Activated CD8-positive, alpha-beta T cell treated with anti-CD3 and anti-CD28 coated beads for 36 hours (primary cell): ENCODE measurements at regions of chr3 and their contacts with region 1.

Region 1: DNA sequence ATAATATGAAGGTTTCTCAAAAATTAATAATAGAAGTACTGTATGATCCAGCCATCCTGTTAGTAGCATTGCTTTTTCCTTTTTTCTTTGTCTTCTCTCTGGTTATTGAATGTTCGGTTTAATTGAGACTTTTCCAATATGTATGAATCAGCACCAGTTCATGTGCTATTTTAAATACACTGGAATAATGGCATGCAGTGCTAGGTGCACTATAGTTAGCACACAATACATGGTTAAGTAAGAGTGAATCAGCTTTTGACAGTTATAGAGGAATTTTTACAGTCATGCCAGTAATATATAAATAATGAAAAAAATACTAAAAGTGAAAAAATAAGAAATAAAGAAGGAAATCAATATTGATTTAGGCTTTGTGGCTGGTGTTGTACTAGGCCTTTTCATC is 113.8 kb upstream of the STRIT1 start:
- DNase-seq: no peak
- ATAC-seq: no peak
- H3K4me3 Mint-ChIP-seq: no peak overlapping the region
- H3K27ac Mint-ChIP-seq: no peak overlapping the region
- H3K4me1 Mint-ChIP-seq: no peaks in the 10 kb centered on the region
- H3K27me3 Mint-ChIP-seq: no peaks in the 10 kb centered on the region
- CTCF ChIP-seq: no peak

Region 2: DNA sequence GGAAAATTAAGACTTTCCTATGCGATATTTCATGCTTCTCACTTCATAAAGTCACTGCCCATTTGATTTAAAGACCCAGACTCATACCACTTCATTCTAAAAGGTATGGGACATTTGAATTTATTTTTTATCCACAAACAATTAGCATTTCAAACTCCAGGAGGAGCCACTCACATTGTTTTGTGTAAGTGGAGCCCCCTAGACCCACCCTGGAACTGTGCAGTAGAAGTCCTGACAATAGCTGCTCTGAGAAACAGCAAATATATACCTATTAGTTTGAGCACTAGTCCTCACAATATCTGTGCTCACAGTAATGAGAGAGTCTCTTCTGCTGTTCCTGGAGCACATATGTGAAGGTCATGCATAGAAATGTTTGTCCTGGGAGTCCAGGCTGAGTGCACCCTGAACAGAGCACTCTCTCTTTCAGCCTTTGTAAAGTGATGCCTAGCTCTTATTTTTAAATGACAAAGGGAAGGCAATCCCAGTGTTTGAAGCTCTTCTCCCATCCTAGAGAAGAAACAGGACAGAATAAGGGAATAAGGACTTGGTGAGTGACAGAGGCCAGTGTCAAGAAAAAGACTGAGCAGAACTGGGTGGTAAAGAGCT is 13.7 kb after region 1 on chr3:
- CTCF ChIA-PET with region 1: no interaction called
- POLR2A ChIA-PET with region 1: interaction called, 3 read pairs
- intact Hi-C with region 1: loop called (anchors 1 kb)
- DNase-seq: no peak
- ATAC-seq: no peak
- H3K4me3 Mint-ChIP-seq: no peak overlapping the region
- H3K27ac Mint-ChIP-seq: no peak overlapping the region
- H3K4me1 Mint-ChIP-seq: peaks cover 3% of the 10 kb centered on the region
- H3K27me3 Mint-ChIP-seq: no peaks in the 10 kb centered on the region
- CTCF ChIP-seq: no peak